ENCODE measurements at regions of chr7 and their contacts with region 1.

Region 1: GRCh38 chr7:24979863-24980533 is at the start of gene OSBPL3:
- DNase-seq: peak; percentile 96
- H3K4me3 Mint-ChIP-seq: peak within 1 kb of the TSS; percentile 82
- H3K27ac Mint-ChIP-seq: peak within 1 kb of the TSS; percentile 52
- H3K4me1 Mint-ChIP-seq: peaks cover 45% of the 10 kb centered on the region
- H3K27me3 Mint-ChIP-seq: no peaks in the 10 kb centered on the region
- CTCF ChIP-seq: peak; percentile 5
- total RNA-seq, gene OSBPL3: 33.8 and 35.7 TPM in 2 replicates

Region 2: GRCh38 chr7:24812310-24812945 is 167.6 kb before region 1 on chr7:
- CTCF ChIA-PET with region 1: interaction called, 28 read pairs
- POLR2A ChIA-PET with region 1: interaction called, 22 read pairs
- intact Hi-C with region 1: no loop called
- DNase-seq: peak; percentile 60
- H3K4me3 Mint-ChIP-seq: no peak overlapping the region
- H3K27ac Mint-ChIP-seq: no peak overlapping the region
- H3K4me1 Mint-ChIP-seq: peaks cover 3% of the 10 kb centered on the region
- H3K27me3 Mint-ChIP-seq: no peaks in the 10 kb centered on the region
- CTCF ChIP-seq: peak; percentile 82

Region 3: GRCh38 chr7:24877790-24878311 is 102.1 kb before region 1 on chr7:
- CTCF ChIA-PET with region 1: interaction called, 25 read pairs
- POLR2A ChIA-PET with region 1: interaction called, 16 read pairs
- intact Hi-C with region 1: no loop called
- DNase-seq: no peak
- H3K4me3 Mint-ChIP-seq: no peak overlapping the region
- H3K27ac Mint-ChIP-seq: no peak overlapping the region
- H3K4me1 Mint-ChIP-seq: peaks cover 4% of the 10 kb centered on the region
- H3K27me3 Mint-ChIP-seq: no peaks in the 10 kb centered on the region
- CTCF ChIP-seq: no peak

Region 4: DNA sequence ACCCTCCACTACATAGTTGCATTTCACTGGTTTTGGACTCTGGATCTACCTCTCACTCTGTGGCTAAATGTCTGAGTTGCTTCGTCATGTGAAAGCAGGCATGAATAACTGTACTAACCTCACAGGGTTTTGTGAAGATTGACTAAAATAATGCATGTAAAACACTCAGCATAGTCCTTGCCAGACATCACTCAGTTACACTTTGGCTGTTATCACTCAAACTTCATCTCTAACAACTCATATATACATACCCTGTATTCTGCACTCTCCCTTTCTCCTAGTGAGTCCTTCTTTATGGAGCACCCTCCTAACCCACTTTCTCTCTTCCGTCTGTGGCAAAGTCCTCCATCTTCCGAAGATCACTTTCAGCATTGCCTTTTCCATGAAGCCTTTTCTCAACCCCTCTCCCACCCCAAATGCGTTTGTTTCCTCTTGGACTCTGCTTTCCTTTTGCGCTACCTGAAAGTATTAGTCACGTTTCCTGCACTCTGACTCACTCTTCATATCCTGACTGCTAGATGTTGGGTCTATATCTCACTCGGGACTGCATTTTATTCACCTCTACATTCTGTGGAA is 72.6 kb before region 1 on chr7:
- CTCF ChIA-PET with region 1: interaction called, 12 read pairs
- POLR2A ChIA-PET with region 1: interaction called, 28 read pairs
- intact Hi-C with region 1: loop called (anchors 1 kb)
- DNase-seq: peak; percentile 89
- H3K4me3 Mint-ChIP-seq: no peak overlapping the region
- H3K27ac Mint-ChIP-seq: no peak overlapping the region
- H3K4me1 Mint-ChIP-seq: peaks cover 43% of the 10 kb centered on the region
- H3K27me3 Mint-ChIP-seq: no peaks in the 10 kb centered on the region
- CTCF ChIP-seq: no peak

Region 5: DNA sequence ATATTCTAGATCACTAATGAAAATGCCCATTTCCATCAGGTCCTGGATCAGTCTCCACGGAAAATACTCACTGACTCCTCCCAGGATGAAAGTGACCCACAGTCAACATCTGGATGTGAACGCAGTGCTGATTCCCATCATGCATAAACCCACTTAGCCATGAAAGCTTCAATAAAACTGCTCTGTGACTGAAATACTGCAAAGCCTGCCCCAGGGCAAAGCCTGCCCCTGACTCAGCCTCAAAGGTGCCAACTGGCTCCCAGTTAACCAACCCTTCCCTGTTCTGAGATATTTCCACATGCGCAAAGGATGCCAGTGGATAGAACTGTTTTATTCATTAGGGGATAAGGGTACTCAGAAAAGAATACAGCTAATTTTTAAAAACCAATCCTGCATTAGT is 24.0 kb before region 1 on chr7:
- CTCF ChIA-PET with region 1: interaction called, 7 read pairs
- POLR2A ChIA-PET with region 1: interaction called, 161 read pairs
- intact Hi-C with region 1: no loop called
- DNase-seq: peak; percentile 88
- H3K4me3 Mint-ChIP-seq: peak overlapping the region; percentile 10
- H3K27ac Mint-ChIP-seq: peak overlapping the region; percentile 65
- H3K4me1 Mint-ChIP-seq: peaks cover 29% of the 10 kb centered on the region
- H3K27me3 Mint-ChIP-seq: no peaks in the 10 kb centered on the region
- CTCF ChIP-seq: no peak

Region 6: DNA sequence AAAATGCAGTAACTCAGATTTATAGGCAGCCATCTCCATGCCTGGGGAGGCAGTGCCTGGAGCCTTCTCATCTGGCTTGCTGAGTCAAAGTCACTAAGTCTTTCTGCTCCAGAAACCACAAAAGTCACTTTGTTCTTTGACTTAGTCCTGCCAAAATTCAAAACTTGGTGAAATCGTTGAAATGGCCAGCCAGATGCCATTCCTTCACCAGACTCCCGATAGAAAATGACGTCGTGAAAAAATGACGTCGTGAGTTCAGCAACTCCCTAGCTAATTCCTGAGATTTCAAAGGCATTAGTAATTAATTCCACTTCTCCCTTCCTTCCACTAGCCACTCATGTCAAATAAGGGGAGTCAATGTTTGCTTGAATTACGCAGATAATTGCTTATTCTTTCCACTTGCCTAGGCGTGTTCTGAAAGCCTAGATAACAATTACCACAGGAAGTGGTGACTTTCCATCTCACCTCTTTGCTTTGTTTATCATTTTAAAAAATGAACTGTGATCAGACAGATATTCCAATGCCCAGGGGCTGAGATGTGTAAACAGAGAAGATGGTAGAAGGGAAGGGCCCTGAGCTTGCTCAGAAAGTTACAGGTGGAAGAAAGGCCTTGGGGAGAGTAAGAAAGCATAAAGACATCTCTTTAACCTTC is 48.5 kb after region 1 on chr7:
- CTCF ChIA-PET with region 1: interaction called, 10 read pairs
- POLR2A ChIA-PET with region 1: interaction called, 39 read pairs
- intact Hi-C with region 1: no loop called
- DNase-seq: peak; percentile 38
- H3K4me3 Mint-ChIP-seq: no peak overlapping the region
- H3K27ac Mint-ChIP-seq: peak overlapping the region; percentile 89
- H3K4me1 Mint-ChIP-seq: peaks cover 28% of the 10 kb centered on the region
- H3K27me3 Mint-ChIP-seq: no peaks in the 10 kb centered on the region
- CTCF ChIP-seq: no peak

Region 7: DNA sequence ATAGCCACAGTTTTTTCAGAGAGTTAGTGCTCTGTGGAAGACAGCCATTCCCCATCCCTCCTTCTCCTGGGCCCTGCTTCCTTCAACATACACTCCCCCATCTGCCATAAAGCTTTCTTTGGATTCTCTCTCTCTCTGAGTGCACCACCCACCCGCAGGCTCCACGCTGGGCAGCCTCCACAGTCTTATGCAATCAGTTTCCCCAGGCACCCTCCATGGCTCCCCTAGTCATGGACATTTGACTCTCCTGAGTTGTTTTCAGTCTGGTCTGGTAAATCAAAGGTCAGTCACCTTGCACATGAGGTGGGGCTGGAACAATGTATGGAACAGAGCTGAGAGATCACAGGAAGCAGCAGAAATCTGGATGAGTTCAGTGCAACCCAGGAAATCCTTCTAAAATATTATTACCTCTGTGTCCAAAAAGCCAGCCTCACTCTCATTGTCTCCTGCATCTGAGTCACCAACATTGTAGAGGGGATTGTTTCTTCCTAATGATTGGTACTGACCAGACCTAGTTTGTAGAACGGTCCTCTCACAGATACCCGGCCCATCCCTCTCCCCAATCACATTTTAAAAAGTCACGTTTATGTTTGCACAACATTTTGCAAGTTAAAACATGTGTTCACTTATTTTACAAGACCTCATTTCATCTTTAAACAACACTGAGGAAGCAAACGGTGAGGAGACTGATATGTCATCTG is 75.0 kb after region 1 on chr7:
- CTCF ChIA-PET with region 1: no interaction called
- POLR2A ChIA-PET with region 1: no interaction called
- intact Hi-C with region 1: no loop called
- DNase-seq: no peak
- H3K4me3 Mint-ChIP-seq: no peak overlapping the region
- H3K27ac Mint-ChIP-seq: no peak overlapping the region
- H3K4me1 Mint-ChIP-seq: peaks cover 9% of the 10 kb centered on the region
- H3K27me3 Mint-ChIP-seq: no peaks in the 10 kb centered on the region
- CTCF ChIP-seq: no peak